ENCODE measurements at regions of chr13 and their contacts with region 1.

Region 1: GRCh38 chr13:110915057-110915873 is at the start of gene ANKRD10:
- DNase-seq: peak; percentile 100
- total RNA-seq, gene ANKRD10: 114 to 138 TPM

Region 2: GRCh38 chr13:110715395-110716235 is 199.7 kb before region 1 on chr13:
- intact Hi-C with region 1: loop called in 1 of 2 experiments (anchors 10 kb)
- DNase-seq: peak; percentile 99

Region 3: GRCh38 chr13:110971486-110971885 is 56.2 kb after region 1 on chr13:
- intact Hi-C with region 1: no loop called
- DNase-seq: no peak

Region 4: GRCh38 chr13:111066544-111066943 is 151.3 kb after region 1 on chr13:
- intact Hi-C with region 1: loop called in 1 of 2 experiments (anchors 10 kb)
- DNase-seq: no peak

Measured in posterior vena cava (tissue), 2 donors.